ENCODE measurements at regions of chr7 and their contacts with region 1.

Region 1: DNA sequence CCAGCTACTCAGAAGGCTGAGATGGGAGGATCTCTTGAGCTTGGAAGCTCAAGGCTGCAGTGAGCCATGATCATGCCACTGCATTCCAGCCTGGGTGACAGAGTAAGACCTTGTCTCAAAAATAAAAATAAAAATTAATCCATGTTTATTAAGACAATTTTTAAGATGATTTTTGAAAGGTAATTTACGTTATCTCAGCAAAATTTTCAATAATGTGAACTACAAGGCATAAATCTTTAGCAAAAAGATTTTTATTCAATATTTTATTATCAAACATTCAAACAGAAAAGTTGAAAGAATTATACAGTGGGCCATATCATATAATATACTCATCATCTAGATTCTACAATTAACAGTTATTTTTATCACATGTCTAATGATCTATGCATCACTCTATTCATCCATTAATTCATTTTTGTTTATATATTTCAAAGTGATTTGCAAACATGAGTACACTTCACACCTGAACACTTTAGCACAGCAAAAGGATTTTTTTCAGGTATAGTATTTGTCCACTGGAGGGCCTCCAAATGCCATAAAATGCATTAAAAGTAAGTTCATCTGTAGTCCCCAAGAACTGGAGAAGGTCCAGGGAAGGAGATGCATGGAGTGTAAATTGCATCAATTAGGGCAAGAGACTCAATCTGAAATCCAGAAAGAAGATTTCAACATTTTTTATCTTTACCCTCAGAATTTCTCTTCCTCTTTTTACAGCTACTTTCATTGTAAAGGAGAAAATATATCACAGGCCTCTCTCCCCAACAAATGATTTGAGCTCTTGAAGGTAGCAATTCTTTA is 38.6 kb upstream of the RSBN1L start:
- DNase-seq: peak; percentile 74
- H3K4me3 ChIP-seq: no peak overlapping the region
- H3K27ac ChIP-seq: no peak overlapping the region
- H3K4me1 ChIP-seq: no peaks in the 10 kb centered on the region
- CTCF ChIP-seq: peak; percentile 97

Region 2: DNA sequence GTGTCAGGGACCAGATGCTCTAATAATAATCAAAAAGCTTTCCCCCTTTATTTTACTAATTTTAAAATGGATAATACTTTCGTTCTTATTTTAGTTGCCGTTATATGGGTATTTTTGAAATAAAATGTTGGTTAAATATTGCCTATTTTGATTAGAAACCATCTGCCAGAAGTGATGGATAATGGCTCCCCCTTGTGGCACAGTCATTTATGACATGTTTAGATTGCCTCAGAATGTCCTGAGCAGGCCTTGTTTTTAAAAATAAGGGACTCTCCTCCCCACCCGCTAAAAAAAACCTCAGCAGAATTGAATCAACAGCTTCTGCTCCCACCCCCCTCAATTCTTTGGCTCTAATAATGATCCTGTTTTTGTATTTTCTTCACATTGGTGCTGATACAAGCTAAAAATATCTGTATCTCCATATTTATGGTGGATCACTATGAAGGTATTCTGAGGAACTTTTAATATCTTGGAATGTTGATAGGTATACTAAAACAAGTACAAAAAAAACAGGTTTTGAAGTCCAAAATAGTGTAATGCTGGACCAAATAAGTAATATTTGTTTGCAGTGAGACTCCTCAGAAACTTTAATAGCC is 101.8 kb after region 1 on chr7:
- CTCF ChIA-PET with region 1: interaction called, 3 read pairs
- POLR2A ChIA-PET with region 1: interaction called, 8 read pairs
- intact Hi-C with region 1: loop called (anchors 1 kb)
- DNase-seq: peak; percentile 76
- H3K4me3 ChIP-seq: no peak overlapping the region
- H3K27ac ChIP-seq: peak overlapping the region; percentile 75
- H3K4me1 ChIP-seq: peaks cover 64% of the 10 kb centered on the region
- CTCF ChIP-seq: peak; percentile 98

Region 3: DNA sequence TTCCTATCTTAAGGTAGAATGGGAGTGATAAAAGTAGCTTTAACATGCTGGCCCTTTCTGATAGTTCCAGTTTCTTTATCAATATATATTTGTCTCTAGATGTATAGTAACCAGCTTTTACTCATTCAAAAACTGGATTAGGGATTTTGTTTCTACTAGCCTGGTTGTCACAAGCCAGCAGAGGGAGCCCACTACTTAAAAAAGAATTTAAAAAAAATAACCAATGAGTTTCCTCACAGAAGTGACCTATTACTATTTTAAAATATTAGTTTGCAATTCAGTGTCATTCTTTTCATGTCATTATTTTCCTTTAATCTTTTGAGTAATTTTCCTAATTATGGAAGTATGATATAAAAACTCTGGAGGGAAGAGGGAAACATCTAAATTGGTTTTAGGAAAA is 283.0 kb after region 1 on chr7:
- CTCF ChIA-PET with region 1: no interaction called
- POLR2A ChIA-PET with region 1: no interaction called
- intact Hi-C with region 1: loop called (anchors 2 kb)
- DNase-seq: peak; percentile 38
- H3K4me3 ChIP-seq: no peak overlapping the region
- H3K27ac ChIP-seq: no peak overlapping the region
- H3K4me1 ChIP-seq: peaks cover 29% of the 10 kb centered on the region
- CTCF ChIP-seq: peak; percentile 96

Region 4: DNA sequence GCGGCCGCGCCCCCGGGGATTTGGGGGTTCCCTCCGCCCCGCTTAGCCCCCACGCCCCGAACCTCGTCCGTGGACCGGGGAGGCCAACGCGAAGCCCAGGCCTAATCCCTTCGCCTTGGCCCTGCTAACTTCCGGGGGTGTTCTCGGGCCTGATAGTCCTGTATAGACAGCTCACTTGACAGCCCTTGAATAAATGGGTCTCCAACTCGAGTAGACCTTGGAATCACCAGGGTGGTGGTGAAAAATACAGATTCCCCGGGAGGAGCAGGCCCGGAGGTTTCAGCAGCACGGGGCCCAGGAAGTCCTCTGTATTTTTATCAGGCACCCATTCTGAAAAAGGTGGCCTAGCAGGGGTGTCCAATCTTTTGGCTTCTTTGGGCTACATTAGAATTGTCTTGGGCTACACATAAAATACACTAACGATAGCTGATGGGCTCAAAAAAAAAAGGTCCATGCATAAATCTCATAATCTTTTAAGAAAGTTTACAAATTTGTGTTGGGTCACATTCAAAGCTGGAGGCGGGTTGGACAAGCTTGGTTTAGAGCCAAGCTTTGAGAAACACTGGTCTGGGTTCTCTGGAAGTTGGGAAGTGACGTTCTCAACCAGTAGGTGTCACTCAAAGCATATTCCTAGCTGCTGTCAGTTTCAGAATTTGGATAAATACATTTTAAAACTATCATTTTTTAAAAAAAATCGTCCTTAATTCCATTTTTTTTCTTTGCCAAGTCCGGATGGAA is 362.7 kb after region 1 on chr7:
- CTCF ChIA-PET with region 1: no interaction called
- POLR2A ChIA-PET with region 1: no interaction called
- intact Hi-C with region 1: loop called (anchors 5 kb)
- DNase-seq: peak; percentile 58
- H3K4me3 ChIP-seq: peak overlapping the region; percentile 59
- H3K27ac ChIP-seq: no peak overlapping the region
- H3K4me1 ChIP-seq: peaks cover 4% of the 10 kb centered on the region
- CTCF ChIP-seq: peak; percentile 87

Region 5: GRCh38 chr7:78039790-78040776 is 382.5 kb after region 1 on chr7:
- CTCF ChIA-PET with region 1: no interaction called
- POLR2A ChIA-PET with region 1: interaction called, 3 read pairs
- intact Hi-C with region 1: loop called (anchors 2 kb)
- DNase-seq: peak; percentile 50
- H3K4me3 ChIP-seq: no peak overlapping the region
- H3K27ac ChIP-seq: no peak overlapping the region
- H3K4me1 ChIP-seq: no peaks in the 10 kb centered on the region
- CTCF ChIP-seq: peak; percentile 87

Region 6: DNA sequence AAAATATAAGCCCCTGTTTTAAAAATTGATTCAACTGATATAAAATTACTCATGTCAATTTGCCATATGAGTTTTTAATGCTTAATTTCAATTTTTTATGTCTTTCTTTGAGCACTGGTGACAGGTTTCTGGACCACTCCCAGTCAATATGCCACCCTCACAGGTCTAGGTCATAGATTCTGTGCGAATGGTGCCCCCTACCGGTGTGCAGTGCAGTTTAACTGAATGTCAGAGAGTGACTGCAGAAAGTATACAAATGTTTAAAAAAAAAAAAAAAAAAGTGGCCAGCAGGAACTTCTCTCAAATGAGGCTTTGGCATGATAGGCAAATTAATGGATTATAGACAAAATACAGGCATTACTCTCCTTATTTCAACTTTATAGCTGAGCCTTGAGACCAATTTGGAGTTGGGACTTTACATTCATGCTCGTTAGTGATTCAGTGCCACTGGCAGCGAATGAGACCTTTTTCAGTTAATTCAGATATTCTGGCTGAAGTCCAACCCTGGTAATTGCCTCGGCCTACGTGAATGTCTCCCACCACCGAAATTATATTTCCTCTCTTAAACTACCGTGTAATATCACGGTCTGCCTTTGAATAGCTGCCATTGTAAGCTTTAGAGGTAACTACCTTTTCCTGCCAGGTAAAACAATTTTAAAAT is 568.6 kb after region 1 on chr7:
- CTCF ChIA-PET with region 1: no interaction called
- POLR2A ChIA-PET with region 1: no interaction called
- intact Hi-C with region 1: loop called (anchors 10 kb)
- DNase-seq: peak; percentile 26
- H3K4me3 ChIP-seq: no peak overlapping the region
- H3K27ac ChIP-seq: no peak overlapping the region
- H3K4me1 ChIP-seq: peaks cover 9% of the 10 kb centered on the region
- CTCF ChIP-seq: peak; percentile 76

Region 7: GRCh38 chr7:79471699-79472098 is 1814.1 kb after region 1 on chr7:
- CTCF ChIA-PET with region 1: no interaction called
- POLR2A ChIA-PET with region 1: no interaction called
- intact Hi-C with region 1: no loop called
- DNase-seq: no peak
- H3K4me3 ChIP-seq: no peak overlapping the region
- H3K27ac ChIP-seq: no peak overlapping the region
- H3K4me1 ChIP-seq: no peaks in the 10 kb centered on the region
- CTCF ChIP-seq: no peak

Measured in OCI-LY7 (cell line).